ENCODE measurements at regions of chr17 and their contacts with region 1.

Region 1: DNA sequence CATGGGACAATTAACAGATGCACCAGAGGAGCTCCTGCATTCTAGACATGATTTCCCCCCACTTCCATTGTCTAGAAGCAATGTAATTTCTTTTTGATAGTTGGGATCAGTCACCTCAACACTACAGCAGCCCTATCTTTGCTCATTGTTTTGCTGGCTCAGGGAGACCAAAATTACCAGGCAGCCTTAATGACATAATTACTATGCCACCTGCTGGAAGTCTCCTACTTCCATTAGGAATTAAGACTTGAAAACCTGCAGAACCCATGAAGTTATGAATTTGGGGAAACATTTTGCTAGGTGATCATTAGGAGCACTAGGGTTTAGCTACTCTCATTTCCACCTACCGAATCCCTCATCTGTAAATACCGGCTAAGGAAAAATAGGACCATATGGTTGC is 312.0 kb upstream of the CA10 start:
- DNase-seq: no peak
- H3K4me3 ChIP-seq: no peak overlapping the region
- H3K4me3 Mint-ChIP-seq: no peak overlapping the region
- H3K27ac Mint-ChIP-seq: no peak overlapping the region
- H3K4me1 ChIP-seq: no peaks in the 10 kb centered on the region
- H3K4me1 Mint-ChIP-seq: no peaks in the 10 kb centered on the region
- H3K27me3 ChIP-seq: no peaks in the 10 kb centered on the region
- H3K27me3 Mint-ChIP-seq: no peaks in the 10 kb centered on the region
- CTCF ChIP-seq: peak in 1 of 2 experiments; percentile 15

Region 2: GRCh38 chr17:52276381-52277008 is 194.1 kb before region 1 on chr17:
- CTCF ChIA-PET with region 1: no interaction called
- POLR2A ChIA-PET with region 1: no interaction called
- intact Hi-C with region 1: no loop called
- DNase-seq: no peak
- H3K4me3 ChIP-seq: no peak overlapping the region
- H3K4me3 Mint-ChIP-seq: no peak overlapping the region
- H3K27ac Mint-ChIP-seq: no peak overlapping the region
- H3K4me1 ChIP-seq: 0 out of 2 replicates have a peak, but pooled peaks cover 4% of the 10 kb centered on the region
- H3K4me1 Mint-ChIP-seq: no peaks in the 10 kb centered on the region
- H3K27me3 ChIP-seq: no peaks in the 10 kb centered on the region
- H3K27me3 Mint-ChIP-seq: peaks cover 6% of the 10 kb centered on the region
- CTCF ChIP-seq: no peak

Region 3: DNA sequence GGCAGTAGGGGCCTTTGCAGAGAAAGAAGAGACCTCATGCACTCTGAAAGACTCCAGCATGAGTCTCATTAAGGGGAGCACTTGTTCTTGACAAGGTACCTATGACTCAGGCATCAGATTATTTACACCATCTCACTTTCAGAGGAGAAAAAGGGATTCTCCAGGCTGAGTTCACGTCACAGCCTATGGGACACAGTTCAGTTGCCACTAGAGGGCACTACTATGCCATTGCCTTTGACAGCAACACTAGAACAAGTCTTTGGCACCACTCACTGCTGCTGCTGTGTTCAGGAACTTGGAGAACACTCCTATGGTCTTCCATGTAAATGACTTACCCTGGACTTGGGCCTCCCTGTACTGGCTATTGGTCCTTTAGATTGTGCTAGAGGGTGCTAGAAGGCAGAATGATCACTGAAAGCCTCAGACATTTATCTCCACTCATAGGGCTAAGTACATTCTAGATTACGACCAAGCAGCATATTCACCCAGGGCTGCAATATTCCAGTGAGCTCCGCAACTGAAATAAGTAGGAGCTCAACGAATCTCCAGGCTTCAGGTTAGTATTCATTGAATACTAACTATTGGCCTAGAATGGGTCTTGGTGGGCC is 87.0 kb before region 1 on chr17:
- CTCF ChIA-PET with region 1: no interaction called
- POLR2A ChIA-PET with region 1: no interaction called
- intact Hi-C with region 1: loop called (anchors 1 kb)
- DNase-seq: peak; percentile 70 to 76
- H3K4me3 ChIP-seq: no peak overlapping the region
- H3K4me3 Mint-ChIP-seq: no peak overlapping the region
- H3K27ac Mint-ChIP-seq: no peak overlapping the region
- H3K4me1 ChIP-seq: no peaks in the 10 kb centered on the region
- H3K4me1 Mint-ChIP-seq: no peaks in the 10 kb centered on the region
- H3K27me3 ChIP-seq: no peaks in the 10 kb centered on the region
- H3K27me3 Mint-ChIP-seq: no peaks in the 10 kb centered on the region
- CTCF ChIP-seq: peak; percentile 70 to 82

Measured in Caco-2 (cell line).